ENCODE measurements at regions of chr20 and their contacts with region 1.

Region 1: DNA sequence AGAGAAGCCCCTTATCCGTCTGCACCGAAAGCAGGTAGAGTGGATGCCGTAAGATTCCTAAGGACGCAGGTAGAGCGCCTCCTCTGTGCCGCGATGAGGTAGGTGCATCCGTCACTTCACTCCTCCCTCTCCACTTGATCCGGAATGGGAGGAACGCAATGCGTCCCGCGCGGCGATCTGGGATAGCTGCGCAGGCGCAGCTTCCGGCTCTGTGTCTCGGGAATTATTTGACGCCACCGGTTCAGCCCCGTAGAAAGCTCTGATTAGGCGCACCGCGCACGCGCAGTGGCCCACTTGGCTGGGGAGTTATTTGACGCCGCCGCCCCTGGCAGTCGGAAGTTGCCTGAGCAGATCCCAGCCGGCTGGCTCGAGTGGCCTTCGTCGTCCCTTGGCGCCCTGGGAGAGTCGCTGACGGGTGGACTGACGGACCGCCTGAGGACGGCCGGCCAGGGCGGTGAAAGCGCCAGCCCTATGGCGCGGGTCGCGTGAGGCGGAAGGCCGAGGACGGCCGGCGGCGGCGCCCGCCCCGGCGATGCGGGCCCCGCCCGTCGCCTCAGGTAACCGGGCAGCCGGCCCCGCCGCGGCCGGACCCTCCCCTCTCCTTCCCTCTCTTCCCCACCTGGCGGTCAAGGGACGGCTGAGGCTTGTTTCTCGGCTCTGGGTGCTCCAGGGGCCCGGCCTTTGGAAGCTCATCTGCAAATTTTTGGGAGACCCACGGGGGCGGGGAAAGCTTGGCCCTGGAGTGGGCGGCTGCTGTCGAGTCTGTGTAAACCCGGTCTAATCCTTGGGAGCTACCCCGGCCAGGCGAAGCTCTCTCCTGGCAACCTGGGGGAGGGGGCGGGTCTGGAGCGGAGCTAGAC is at the start of gene RALGAPB:
- DNase-seq: peak; percentile 99
- H3K4me3 ChIP-seq: peak within 1 kb of the TSS; percentile 69 to 92 (median 79)
- H3K27ac ChIP-seq: peak within 1 kb of the TSS; percentile 80; the same call in 1 of the 2 replicates
- H3K4me1 ChIP-seq: peaks cover 0 to 8% (median 4%) of the 10 kb centered on the region in 4 experiments; a peak in 6 of 7 replicates
- H3K27me3 ChIP-seq: no peaks in the 10 kb centered on the region; a peak in 1 of 7 replicates
- CTCF ChIP-seq: peak; percentile 36 to 74 (median 68)
- EP300 ChIP-seq: no peak
- POLR2A ChIP-seq: peak; percentile 59 to 89
- RAD21 ChIP-seq: peak in 1 of 2 experiments; percentile 9; a peak in 1 of 4 replicates
- total RNA-seq, gene RALGAPB: 33.8 and 35.1 TPM in 2 replicates

Region 2: DNA sequence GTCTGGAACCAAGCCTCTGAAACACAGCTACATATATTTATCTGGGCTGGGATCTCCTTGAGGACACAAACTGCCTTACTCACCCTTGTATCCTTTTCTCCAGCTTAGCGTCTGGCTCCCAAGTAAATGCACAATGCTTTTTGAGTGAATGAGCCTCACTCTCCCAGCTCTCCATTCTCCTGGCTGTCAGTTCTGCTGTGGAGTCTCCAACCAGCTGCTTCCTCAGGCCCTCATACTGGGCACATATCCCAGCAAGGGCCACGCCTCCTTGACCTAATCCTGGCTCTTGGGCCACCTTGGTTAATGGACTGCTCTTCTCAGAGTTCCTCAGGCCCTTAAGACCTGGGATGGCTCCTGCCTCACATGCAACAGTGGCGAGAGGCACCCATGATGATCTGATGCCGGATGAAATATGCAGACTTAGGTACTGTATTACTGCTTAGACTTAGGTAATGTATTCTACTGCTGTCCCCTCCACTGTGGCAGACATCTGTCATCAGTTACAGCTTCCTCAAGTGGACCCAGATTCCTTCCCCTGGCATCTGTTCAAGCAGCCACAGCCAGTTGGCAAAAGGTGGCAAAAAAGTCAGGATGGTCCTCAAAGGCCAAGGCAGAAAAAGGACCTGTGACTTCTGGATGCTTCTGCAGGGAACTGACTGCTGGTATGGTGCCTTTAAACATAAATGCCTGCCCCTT is 54.1 kb before region 1 on chr20:
- CTCF ChIA-PET with region 1: no interaction called
- POLR2A ChIA-PET with region 1: interaction called, 17 read pairs
- DNase-seq: no peak
- H3K4me3 ChIP-seq: no peak overlapping the region
- H3K27ac ChIP-seq: no peak overlapping the region
- H3K4me1 ChIP-seq: peaks cover 0 to 5% (median under 1%) of the 10 kb centered on the region in 4 experiments; a peak in 4 of 7 replicates
- H3K27me3 ChIP-seq: no peaks in the 10 kb centered on the region
- CTCF ChIP-seq: no peak
- EP300 ChIP-seq: no peak
- POLR2A ChIP-seq: peak in 1 of 2 experiments; percentile 45; a peak in 1 of 3 replicates
- RAD21 ChIP-seq: no peak

Region 3: GRCh38 chr20:38434743-38435554 is 37.8 kb before region 1 on chr20 and contains the start of gene SNHG17:
- CTCF ChIA-PET with region 1: interaction called, 37 read pairs
- POLR2A ChIA-PET with region 1: interaction called, 73 read pairs
- DNase-seq: peak; percentile 84 to 95
- H3K4me3 ChIP-seq: peak within 1 kb of the TSS; percentile 75 to 97 (median 94)
- H3K27ac ChIP-seq: peak within 1 kb of the TSS; percentile 89
- H3K4me1 ChIP-seq: peaks cover 0 to 17% (median 7%) of the 10 kb centered on the region in 4 experiments; a peak in 6 of 7 replicates
- H3K27me3 ChIP-seq: no peaks in the 10 kb centered on the region
- CTCF ChIP-seq: peak; percentile 98 to 100 (median 99)
- EP300 ChIP-seq: peak in 1 of 2 experiments; percentile 82; a peak in 1 of 3 replicates
- POLR2A ChIP-seq: peak; percentile 94 to 98
- RAD21 ChIP-seq: peak; percentile 24 to 42; a peak in 3 of 4 replicates
- total RNA-seq, gene SNHG17: 59.8 and 63.1 TPM in 2 replicates

Region 4: DNA sequence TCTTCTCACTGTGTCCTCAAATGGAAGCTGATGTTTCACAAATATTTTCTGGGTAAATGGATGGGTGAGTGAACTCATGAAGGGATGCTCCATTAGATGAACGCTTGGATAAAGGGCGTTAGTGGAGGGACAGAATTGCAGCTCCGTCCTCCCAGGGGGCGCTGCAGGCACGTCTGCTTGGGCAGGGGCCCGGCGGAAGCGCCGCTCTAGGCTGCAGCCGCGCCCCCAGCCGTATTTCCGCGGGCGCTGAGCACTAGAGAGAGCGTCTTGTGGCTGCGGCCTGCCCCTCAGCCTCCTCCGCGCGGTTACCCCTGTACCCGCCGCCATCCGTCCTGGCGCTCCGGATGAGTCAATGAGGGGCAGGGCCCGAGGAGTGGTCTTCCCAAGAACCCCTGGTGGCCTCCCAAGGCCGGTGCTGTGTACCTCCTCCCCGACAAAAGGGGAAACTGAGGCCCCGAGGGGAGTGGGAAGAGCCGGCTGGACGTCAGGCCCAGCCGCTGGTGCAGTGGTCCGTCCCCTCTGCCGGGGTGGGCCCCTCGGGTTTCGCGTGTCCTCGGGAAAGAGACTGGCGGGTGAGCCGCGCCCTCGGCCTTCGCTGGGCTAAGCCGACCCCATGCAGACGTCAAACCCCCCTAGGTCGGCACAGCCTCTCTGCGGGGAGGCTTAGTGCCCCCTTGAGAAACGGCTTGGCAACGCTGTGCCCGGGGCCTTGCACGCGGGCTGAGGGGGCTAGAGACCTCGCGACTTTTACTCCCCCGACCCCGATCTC is 26.1 kb before region 1 on chr20:
- CTCF ChIA-PET with region 1: interaction called, 60 read pairs
- POLR2A ChIA-PET with region 1: interaction called, 18 read pairs
- DNase-seq: peak; percentile 80 to 97
- H3K4me3 ChIP-seq: peak overlapping the region; percentile 37 to 87 (median 79)
- H3K27ac ChIP-seq: peak overlapping the region; percentile 67; the same call in 1 of the 2 replicates
- H3K4me1 ChIP-seq: peaks cover 0 to 7% (median 4%) of the 10 kb centered on the region in 4 experiments; a peak in 4 of 7 replicates
- H3K27me3 ChIP-seq: no peaks in the 10 kb centered on the region; a peak in 2 of 7 replicates
- CTCF ChIP-seq: peak; percentile 96 to 97 (median 97)
- EP300 ChIP-seq: peak in 1 of 2 experiments; percentile 47; a peak in 1 of 3 replicates
- POLR2A ChIP-seq: peak; percentile 88 to 92
- RAD21 ChIP-seq: peak; percentile 33 to 46; a peak in 3 of 4 replicates

Region 5: DNA sequence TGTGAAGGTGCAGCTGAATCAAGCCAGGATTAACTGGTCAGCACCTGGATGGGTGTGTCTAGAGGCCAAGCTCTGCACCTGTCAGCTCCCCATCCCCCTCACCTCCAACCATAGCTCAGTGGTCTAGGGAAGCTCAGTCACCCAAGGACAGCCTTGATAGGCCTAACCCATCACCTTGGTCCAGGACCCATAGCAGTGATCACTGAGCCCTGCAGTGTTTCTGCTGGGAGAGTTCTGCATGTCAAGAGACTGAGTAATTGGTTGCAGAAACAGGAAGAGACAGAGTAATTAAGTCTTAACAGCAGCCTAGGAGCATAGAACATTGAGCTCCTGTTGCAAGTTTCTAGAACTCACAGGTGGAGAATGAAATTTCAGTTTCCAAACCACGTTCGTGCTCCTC is 18.8 kb before region 1 on chr20:
- CTCF ChIA-PET with region 1: interaction called, 60 read pairs
- POLR2A ChIA-PET with region 1: interaction called, 18 read pairs
- DNase-seq: no peak
- H3K4me3 ChIP-seq: no peak overlapping the region
- H3K27ac ChIP-seq: no peak overlapping the region
- H3K4me1 ChIP-seq: no peaks in the 10 kb centered on the region
- H3K27me3 ChIP-seq: no peaks in the 10 kb centered on the region
- CTCF ChIP-seq: no peak
- EP300 ChIP-seq: no peak
- POLR2A ChIP-seq: no peak
- RAD21 ChIP-seq: no peak

Measured in H1 (cell line).